ENCODE measurements at regions of chr19 and their contacts with region 1.

Region 1: GRCh38 chr19:41883821-41884733 is 1.1 kb downstream of the ARHGEF1 start:
- DNase-seq: peak; percentile 93
- ATAC-seq: peak; percentile 81
- H3K4me3 Mint-ChIP-seq: peak overlapping the region; percentile 91
- H3K27ac Mint-ChIP-seq: peak overlapping the region; percentile 95
- H3K4me1 Mint-ChIP-seq: peaks cover 48% of the 10 kb centered on the region
- H3K27me3 Mint-ChIP-seq: no peaks in the 10 kb centered on the region

Region 2: DNA sequence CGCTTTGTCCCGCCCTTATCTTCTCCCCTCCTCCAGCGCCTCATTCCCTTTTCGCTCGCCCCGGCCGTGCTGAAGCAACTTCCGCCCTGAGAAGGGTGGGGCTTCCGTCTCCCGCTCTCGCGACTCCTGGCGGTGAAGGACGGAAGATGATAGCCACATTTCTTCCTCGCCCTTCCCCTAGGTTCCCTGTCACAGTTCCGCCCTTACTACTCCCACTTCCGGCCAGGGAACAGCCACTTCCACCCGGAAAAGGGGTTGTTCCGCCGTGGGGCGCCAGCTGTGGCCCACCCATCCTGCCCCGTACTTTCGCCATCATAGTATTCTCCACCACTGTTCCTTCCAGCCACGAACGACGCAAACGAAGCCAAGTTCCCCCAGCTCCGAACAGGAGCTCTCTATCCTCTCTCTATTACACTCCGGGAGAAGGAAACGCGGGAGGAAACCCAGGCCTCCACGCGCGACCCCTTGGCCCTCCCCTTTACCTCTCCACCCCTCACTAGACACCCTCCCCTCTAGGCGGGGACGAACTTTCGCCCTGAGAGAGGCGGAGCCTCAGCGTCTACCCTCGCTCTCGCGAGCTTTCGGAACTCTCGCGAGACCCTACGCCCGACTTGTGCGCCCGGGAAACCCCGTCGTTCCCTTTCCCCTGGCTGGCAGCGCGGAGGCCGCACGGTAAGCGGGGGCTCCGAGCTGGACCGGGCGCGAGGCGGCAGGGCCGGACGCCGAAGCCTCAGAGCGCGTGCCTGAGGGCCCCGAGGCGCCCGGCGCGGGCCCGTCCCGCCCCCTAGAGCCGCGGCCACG is 24.3 kb before region 1 on chr19 and contains the start of gene RPS19:
- POLR2A ChIA-PET with region 1: interaction called, 106 read pairs
- DNase-seq: peak; percentile 97
- ATAC-seq: peak; percentile 83
- H3K4me3 Mint-ChIP-seq: peak within 1 kb of the TSS; percentile 85
- H3K27ac Mint-ChIP-seq: peak within 1 kb of the TSS; percentile 89
- H3K4me1 Mint-ChIP-seq: peaks cover 41% of the 10 kb centered on the region
- H3K27me3 Mint-ChIP-seq: no peaks in the 10 kb centered on the region
- total RNA-seq, gene RPS19: 3,237 to 3,326 TPM

Region 3: GRCh38 chr19:41872775-41873647 is 11.1 kb before region 1 on chr19:
- POLR2A ChIA-PET with region 1: interaction called, 314 read pairs
- DNase-seq: peak; percentile 78
- ATAC-seq: no peak
- H3K4me3 Mint-ChIP-seq: peak overlapping the region; percentile 60
- H3K27ac Mint-ChIP-seq: peak overlapping the region; percentile 87
- H3K4me1 Mint-ChIP-seq: peaks cover 67% of the 10 kb centered on the region
- H3K27me3 Mint-ChIP-seq: no peaks in the 10 kb centered on the region

Region 4: GRCh38 chr19:41895745-41896580 is 11.9 kb after region 1 on chr19:
- POLR2A ChIA-PET with region 1: interaction called, 31 read pairs
- DNase-seq: no peak
- ATAC-seq: peak; percentile 21
- H3K4me3 Mint-ChIP-seq: no peak overlapping the region
- H3K27ac Mint-ChIP-seq: peak overlapping the region; percentile 71
- H3K4me1 Mint-ChIP-seq: peaks cover 31% of the 10 kb centered on the region
- H3K27me3 Mint-ChIP-seq: no peaks in the 10 kb centered on the region

Region 5: GRCh38 chr19:41903193-41903953 is 19.3 kb after region 1 on chr19:
- POLR2A ChIA-PET with region 1: interaction called, 31 read pairs
- DNase-seq: no peak
- ATAC-seq: no peak
- H3K4me3 Mint-ChIP-seq: no peak overlapping the region
- H3K27ac Mint-ChIP-seq: no peak overlapping the region
- H3K4me1 Mint-ChIP-seq: peaks cover 18% of the 10 kb centered on the region
- H3K27me3 Mint-ChIP-seq: no peaks in the 10 kb centered on the region

Region 6: DNA sequence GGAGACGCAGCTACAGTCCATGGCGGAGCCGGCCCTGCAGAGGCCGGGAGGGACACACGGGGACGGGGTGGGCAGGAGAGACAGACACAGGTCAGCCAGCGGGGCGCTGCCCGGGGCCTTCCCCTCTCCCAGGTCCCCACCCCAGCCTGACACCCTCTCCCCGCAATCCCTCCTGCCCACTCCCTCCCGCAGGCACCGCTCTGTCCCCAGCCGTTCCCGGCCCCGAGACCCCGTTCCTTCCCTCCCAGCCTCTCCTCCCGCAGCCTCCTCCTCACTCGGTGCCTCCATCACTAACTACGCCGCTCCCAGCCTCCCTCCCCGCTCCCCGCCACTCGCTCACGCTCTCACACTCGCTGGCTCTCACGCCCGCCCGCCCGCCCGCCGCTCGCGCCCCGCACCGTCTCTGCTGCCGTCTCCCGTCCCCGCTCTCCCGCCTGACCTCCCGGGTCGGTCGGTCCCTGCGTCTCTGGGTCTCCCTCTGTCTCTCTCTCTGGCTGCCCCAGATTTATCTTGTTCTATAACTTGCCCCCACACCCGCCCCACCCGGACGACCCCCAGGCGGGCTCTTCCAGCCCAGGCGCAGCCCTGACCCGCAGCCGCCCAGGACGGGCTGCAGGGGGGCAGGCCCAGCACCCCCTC is 28.9 kb after region 1 on chr19:
- POLR2A ChIA-PET with region 1: interaction called, 14 read pairs
- DNase-seq: no peak
- ATAC-seq: peak; percentile 11
- H3K4me3 Mint-ChIP-seq: no peak overlapping the region
- H3K27ac Mint-ChIP-seq: no peak overlapping the region
- H3K4me1 Mint-ChIP-seq: peaks cover 9% of the 10 kb centered on the region
- H3K27me3 Mint-ChIP-seq: peaks cover 24% of the 10 kb centered on the region

Region 7: GRCh38 chr19:41945135-41945766 is 61.2 kb after region 1 on chr19:
- POLR2A ChIA-PET with region 1: interaction called, 16 read pairs
- DNase-seq: peak; percentile 82
- ATAC-seq: peak; percentile 90
- H3K4me3 Mint-ChIP-seq: peak overlapping the region; percentile 69
- H3K27ac Mint-ChIP-seq: peak overlapping the region; percentile 60
- H3K4me1 Mint-ChIP-seq: peaks cover 33% of the 10 kb centered on the region
- H3K27me3 Mint-ChIP-seq: peaks cover 8% of the 10 kb centered on the region

Region 8: DNA sequence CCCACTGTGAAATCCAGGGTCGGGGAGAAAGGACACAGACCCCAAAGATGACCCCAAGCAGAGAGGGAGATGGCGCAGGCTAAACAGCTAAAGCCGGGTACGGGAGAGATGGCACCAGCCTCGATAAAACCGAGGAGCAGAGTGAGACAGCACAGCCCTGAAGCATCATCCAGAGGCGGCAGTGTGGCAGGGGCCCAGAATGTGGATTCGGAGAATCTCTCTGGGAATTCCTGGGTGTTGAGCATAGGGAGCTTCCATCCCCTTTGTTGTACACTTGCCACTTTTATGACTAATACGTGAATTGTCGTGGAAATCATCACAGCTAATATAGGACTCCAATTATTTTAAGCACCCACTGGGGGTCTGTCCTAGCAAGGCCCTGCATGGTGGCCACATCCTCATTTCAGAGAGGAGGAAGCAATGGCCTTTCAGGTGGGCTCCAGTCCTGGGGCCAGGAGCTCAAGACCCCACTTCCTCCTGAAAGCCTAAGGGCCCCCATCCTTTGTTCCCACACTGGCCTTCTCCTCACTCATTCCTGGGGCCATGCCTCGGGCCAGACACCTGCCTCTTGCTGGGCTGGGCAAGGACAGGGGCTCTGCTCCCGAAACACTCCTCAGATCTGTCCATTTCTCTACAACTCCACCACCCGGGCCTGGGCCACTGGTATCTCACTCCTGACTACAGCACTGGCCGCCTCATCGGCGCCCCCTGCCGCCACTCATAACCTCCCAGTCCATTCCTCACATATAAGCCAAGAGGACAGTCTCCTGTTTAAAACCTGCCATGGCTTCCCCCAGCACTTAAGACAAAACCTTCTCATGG is 139.3 kb after region 1 on chr19:
- POLR2A ChIA-PET with region 1: no interaction called
- DNase-seq: no peak
- ATAC-seq: no peak
- H3K4me3 Mint-ChIP-seq: no peak overlapping the region
- H3K27ac Mint-ChIP-seq: no peak overlapping the region
- H3K4me1 Mint-ChIP-seq: peaks cover 6% of the 10 kb centered on the region
- H3K27me3 Mint-ChIP-seq: peaks cover 9% of the 10 kb centered on the region

Measured in activated naive CD8-positive, alpha-beta T cell treated with anti-CD3 and anti-CD28 coated beads, Interleukin-2, amount 10 ng/mL, durations not matched to agents 7 days and 5 days (primary cell).